ENCODE measurements at regions of chr14 and their contacts with region 1.

Region 1: DNA sequence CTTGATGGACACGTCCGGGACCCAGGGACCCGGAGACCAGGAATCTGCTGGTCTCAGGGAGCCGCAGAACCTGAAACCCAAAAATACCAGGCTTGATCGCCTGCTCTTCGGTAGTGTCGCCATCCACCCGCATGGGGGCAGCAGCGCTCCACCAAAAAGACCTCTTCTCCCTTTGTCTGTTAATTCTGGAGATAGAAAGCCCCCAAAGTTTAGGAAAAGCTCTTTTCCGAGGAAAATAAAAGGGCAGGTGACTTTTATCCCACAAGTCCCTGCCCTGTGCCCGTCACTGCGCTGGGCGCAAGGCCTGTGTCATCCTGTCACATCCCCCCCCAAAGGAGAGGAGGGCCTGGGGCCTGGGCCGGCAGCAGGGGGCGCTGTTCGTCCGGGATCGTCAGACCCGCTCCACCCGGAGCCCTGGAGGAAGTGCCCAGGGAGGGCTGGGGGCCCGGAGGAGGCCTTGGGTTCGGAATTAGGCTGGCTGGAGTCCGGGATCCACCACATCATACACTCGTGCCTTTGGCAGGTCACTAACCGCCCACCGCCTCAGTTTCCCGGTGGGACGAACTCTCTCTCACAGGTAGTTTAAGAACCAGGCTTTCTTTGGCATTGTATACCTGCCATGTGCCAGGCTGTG is 31.9 kb downstream of the DAD1 start:
- DNase-seq: peak; percentile 77
- CTCF ChIP-seq: peak; percentile 92

Region 2: GRCh38 chr14:21868442-21869046 is 688.6 kb before region 1 on chr14:
- CTCF ChIA-PET with region 1: no interaction called
- POLR2A ChIA-PET with region 1: no interaction called
- DNase-seq: peak; percentile 46
- CTCF ChIP-seq: peak; percentile 74

Region 3: GRCh38 chr14:22194664-22195063 is 362.4 kb before region 1 on chr14:
- CTCF ChIA-PET with region 1: no interaction called
- POLR2A ChIA-PET with region 1: no interaction called
- DNase-seq: no peak
- CTCF ChIP-seq: no peak

Region 4: DNA sequence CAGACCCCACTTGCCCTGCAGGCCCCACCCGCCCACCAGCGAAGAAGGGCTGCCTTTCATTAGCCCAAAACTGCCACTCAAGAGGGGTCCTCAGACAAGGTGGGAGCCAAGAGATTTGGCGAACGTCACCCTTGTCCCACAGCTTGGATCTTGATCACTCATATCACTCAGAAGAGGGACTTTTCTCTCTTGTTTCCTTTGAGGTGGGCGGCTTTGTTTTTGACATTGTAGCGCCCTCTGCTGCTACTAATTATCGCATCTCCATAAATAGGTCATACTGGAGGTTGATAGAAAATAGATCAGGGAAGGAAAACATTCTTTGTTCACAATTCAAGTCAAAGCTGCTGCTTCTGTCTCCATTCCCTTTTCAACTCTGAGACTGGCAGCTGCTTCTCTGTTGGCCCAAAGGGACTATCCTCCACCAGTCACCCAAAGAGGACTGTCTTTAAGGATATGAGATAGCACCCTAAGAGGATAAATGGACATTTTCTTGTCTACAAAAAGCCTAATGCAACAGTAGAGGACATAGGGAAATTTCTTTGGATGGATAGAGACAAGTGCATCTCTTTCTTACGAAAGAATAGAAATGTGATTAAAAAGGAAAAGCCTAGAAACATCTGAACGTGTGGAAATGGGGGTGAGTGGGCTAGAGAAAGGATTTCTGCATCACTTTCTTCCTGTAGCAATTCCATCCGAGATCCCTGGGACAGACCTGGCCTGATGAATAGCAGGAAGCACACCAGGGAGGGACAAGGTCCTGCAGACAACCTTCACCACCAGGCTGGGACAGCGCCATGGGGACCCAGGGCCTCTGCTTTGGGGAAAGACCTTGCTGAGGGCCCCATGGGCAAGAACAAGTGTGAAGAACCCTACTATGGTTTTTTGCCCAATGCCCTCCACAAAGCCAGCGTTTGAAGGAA is 83.9 kb before region 1 on chr14:
- CTCF ChIA-PET with region 1: interaction called, 22 read pairs
- POLR2A ChIA-PET with region 1: interaction called, 4 read pairs
- DNase-seq: peak; percentile 71
- CTCF ChIP-seq: peak; percentile 61

Region 5: DNA sequence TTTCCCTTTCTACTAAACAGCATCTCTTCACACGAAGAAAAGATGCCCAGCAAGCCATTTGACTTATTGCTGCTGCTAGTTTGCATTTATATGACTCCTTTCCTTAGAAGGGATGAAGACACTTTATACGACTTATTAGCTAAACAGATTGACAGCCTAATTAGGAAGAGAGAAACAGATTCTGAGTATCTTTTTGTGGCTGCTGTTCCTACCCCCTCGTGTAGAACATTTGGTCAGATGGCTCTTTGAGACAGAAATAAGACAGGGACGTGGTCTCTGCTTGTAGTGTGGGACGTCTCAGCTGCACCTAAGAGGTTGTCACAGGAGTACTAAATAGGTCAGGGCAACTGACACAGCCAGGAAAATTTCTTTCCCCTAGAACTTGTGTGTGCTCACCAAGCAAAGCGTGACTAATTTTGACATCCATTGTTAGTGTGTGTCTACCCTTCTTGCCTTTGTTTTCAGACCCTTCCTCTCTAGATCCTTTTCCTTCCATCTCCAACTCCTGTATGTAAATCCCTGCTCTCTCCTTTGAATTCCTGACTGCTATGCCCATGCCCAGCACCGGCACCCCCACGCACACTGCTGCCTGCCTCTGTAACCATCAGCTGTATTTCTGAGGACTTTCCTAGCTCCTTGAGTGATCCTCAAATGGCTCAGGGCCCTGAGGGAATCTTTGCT is 51.3 kb before region 1 on chr14:
- CTCF ChIA-PET with region 1: interaction called, 22 read pairs
- POLR2A ChIA-PET with region 1: interaction called, 3 read pairs
- DNase-seq: peak; percentile 48
- CTCF ChIP-seq: no peak

Region 6: DNA sequence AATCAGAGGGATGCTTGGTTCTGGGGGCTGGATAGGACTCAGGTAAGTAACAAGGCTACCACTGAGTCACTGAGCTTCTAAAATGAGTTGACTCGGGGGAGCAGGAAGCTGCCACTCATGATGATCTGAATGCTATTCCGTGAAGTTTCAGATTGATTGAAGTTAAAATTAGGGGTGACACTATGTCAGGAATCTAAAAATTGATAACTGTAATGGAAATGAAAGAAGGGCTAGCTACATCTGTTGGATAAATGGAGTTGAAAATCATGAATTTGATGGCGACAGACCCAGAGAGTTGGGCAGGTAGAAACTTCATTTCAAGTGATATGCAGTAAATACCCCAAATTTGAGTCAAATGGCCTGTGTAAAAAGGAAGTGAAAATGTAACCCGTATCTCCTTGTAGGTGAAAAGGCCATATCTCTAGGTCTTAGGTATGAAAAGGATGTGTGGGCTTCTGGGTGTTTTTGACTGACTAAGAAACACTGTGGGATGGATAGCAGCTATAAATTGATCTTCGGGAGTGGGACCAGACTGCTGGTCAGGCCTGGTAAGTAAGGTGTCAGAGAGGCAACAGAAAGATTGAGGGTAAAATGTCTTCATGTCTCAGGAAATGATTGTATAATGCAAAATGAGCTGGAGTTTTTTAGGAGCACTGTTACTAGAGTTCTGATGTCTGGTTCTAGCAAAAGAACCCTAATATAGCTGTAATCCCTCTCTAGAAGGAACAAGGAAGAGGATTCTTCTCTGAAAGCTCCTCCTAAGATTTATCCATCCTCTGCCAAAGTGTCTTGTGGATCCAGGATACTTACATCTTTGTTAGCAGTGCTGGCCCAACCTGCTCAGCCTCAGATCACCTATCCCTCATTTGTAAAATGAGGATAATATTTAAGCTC is 25.4 kb before region 1 on chr14:
- CTCF ChIA-PET with region 1: interaction called, 20 read pairs
- POLR2A ChIA-PET with region 1: no interaction called
- DNase-seq: peak; percentile 60
- CTCF ChIP-seq: no peak

Region 7: DNA sequence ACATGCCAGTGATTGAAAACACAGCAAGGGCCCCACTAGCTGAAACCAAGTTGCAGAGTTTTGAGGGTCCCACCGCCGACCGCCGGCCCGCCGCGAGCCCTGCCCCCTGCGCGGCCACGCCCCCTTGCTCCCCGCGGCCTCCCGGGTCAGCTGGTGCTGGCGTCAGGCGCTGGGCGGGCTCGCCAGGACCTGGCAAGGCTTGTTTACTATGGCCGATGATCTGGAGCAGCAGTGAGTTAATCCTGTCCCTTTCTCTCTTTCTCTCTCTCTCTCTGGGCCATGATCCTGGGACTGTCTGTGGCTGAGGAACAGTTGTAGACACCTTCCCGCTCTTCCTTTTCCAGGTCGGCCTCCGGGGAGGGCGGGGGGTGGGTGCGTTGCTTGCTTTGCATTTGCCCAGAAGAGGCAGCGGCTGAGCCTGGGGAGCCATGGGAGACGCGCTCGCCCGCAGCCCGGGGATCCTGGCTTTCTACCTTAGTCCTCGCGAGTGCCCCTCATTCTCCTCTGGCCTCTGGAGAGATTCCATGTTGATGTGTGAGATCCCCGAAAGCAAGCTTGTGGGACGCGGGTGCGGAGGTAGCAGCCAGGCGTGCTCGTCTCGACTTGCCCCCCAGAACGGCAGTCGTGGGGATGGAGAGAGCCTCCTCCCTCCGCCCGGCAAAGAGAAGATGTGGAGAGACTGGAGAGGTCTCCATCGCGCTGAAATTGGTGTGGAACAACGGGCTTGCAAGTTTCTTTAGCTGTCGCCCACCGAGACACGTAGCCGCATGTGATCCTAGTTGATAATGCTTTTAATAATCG is 41.2 kb after region 1 on chr14 and contains the start of gene ABHD4:
- CTCF ChIA-PET with region 1: interaction called, 10 read pairs
- POLR2A ChIA-PET with region 1: no interaction called
- DNase-seq: peak; percentile 87
- CTCF ChIP-seq: no peak

Region 8: GRCh38 chr14:22865424-22866405 is 308.6 kb after region 1 on chr14:
- CTCF ChIA-PET with region 1: interaction called, 11 read pairs
- POLR2A ChIA-PET with region 1: no interaction called
- DNase-seq: no peak
- CTCF ChIP-seq: no peak